Caco-2 (cell line): ENCODE measurements at regions of chr2 and their contacts with region 1.

Region 1: GRCh38 chr2:196337208-196337953 is 166.0 kb upstream of the STK17B start:
- DNase-seq: peak in 1 of 2 experiments; percentile 34
- H3K4me3 ChIP-seq: no peak overlapping the region
- H3K4me3 Mint-ChIP-seq: no peak overlapping the region
- H3K27ac Mint-ChIP-seq: no peak overlapping the region
- H3K4me1 ChIP-seq: peaks cover 7% of the 10 kb centered on the region; the same call in 1 of the 2 replicates
- H3K4me1 Mint-ChIP-seq: peaks cover 7% of the 10 kb centered on the region
- H3K27me3 ChIP-seq: no peaks in the 10 kb centered on the region
- H3K27me3 Mint-ChIP-seq: no peaks in the 10 kb centered on the region
- CTCF ChIP-seq: peak; percentile 25 to 72

Region 2: DNA sequence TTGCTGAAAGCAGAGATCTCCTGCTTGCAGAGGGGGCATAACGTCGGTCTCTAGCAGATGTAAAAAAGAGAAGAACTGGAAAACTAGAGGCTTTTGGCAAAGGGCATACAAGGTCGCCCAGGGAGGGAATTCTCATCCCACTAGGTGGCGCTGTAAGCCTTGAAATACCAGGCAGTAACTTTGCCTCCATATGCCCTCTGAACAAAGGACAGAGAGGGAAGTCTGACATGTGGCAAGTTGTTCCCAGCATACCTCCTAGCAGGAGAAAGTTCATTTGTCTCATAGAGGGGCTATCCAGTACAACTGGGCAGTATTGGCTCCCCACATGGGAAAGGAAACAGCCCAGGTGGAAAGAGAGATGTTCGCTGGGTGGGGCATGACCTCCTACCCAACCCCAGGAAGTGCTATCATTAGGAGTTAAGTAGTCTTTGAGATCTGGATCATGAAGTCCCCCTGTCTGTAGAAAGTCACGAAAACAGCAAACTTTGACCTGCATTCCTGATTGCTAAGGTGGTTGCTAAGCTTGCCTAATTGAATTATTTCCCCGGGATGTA is 205.9 kb before region 1 on chr2:
- CTCF ChIA-PET with region 1: interaction called, 3 read pairs
- POLR2A ChIA-PET with region 1: no interaction called
- intact Hi-C with region 1: loop called (anchors 1 kb)
- DNase-seq: peak; percentile 58 to 72
- H3K4me3 ChIP-seq: no peak overlapping the region
- H3K4me3 Mint-ChIP-seq: no peak overlapping the region
- H3K27ac Mint-ChIP-seq: peak overlapping the region; percentile 66
- H3K4me1 ChIP-seq: no peaks in the 10 kb centered on the region
- H3K4me1 Mint-ChIP-seq: no peaks in the 10 kb centered on the region
- H3K27me3 ChIP-seq: no peaks in the 10 kb centered on the region
- H3K27me3 Mint-ChIP-seq: no peaks in the 10 kb centered on the region
- CTCF ChIP-seq: peak in 1 of 2 experiments; percentile 68